ENCODE measurements at regions of chr12 and their contacts with region 1.

Region 1: GRCh38 chr12:15584366-15585041 is 204.7 kb downstream of the EPS8 start:
- DNase-seq: peak; percentile 61
- ATAC-seq: no peak
- H3K4me3 Mint-ChIP-seq: no peak overlapping the region
- H3K27ac Mint-ChIP-seq: no peak overlapping the region
- H3K4me1 Mint-ChIP-seq: peaks cover 20% of the 10 kb centered on the region
- H3K27me3 Mint-ChIP-seq: peaks cover 2% of the 10 kb centered on the region

Region 2: GRCh38 chr12:15453613-15454012 is 130.9 kb before region 1 on chr12:
- CTCF ChIA-PET with region 1: no interaction called
- POLR2A ChIA-PET with region 1: no interaction called
- DNase-seq: no peak
- ATAC-seq: no peak
- H3K4me3 Mint-ChIP-seq: no peak overlapping the region
- H3K27ac Mint-ChIP-seq: no peak overlapping the region
- H3K4me1 Mint-ChIP-seq: peaks cover 3% of the 10 kb centered on the region
- H3K27me3 Mint-ChIP-seq: peaks cover 2% of the 10 kb centered on the region

Region 3: GRCh38 chr12:15540469-15540872 is 44.0 kb before region 1 on chr12:
- CTCF ChIA-PET with region 1: interaction called, 720 read pairs
- POLR2A ChIA-PET with region 1: no interaction called
- DNase-seq: no peak
- ATAC-seq: no peak
- H3K4me3 Mint-ChIP-seq: no peak overlapping the region
- H3K27ac Mint-ChIP-seq: no peak overlapping the region
- H3K4me1 Mint-ChIP-seq: peaks cover 10% of the 10 kb centered on the region
- H3K27me3 Mint-ChIP-seq: no peaks in the 10 kb centered on the region

Region 4: GRCh38 chr12:15563663-15564062 is 20.8 kb before region 1 on chr12:
- CTCF ChIA-PET with region 1: interaction called, 114 read pairs
- POLR2A ChIA-PET with region 1: no interaction called
- DNase-seq: peak; percentile 46
- ATAC-seq: peak; percentile 71
- H3K4me3 Mint-ChIP-seq: peak overlapping the region; percentile 51
- H3K27ac Mint-ChIP-seq: peak overlapping the region; percentile 91
- H3K4me1 Mint-ChIP-seq: peaks cover 57% of the 10 kb centered on the region
- H3K27me3 Mint-ChIP-seq: no peaks in the 10 kb centered on the region

Region 5: GRCh38 chr12:15856097-15856982 is 271.8 kb after region 1 on chr12:
- CTCF ChIA-PET with region 1: interaction called, 32 read pairs
- POLR2A ChIA-PET with region 1: no interaction called
- DNase-seq: peak; percentile 69
- ATAC-seq: peak; percentile 65
- H3K4me3 Mint-ChIP-seq: no peak overlapping the region
- H3K27ac Mint-ChIP-seq: no peak overlapping the region
- H3K4me1 Mint-ChIP-seq: no peaks in the 10 kb centered on the region
- H3K27me3 Mint-ChIP-seq: peaks cover 16% of the 10 kb centered on the region

Measured in activated CD8-positive, alpha-beta T cell treated with anti-CD3 and anti-CD28 coated beads, Interleukin-2, amount 10 ng/mL, durations not matched to agents 7 days and 5 days (primary cell).